ENCODE measurements at regions of chr3 and their contacts with region 1.

Region 1: DNA sequence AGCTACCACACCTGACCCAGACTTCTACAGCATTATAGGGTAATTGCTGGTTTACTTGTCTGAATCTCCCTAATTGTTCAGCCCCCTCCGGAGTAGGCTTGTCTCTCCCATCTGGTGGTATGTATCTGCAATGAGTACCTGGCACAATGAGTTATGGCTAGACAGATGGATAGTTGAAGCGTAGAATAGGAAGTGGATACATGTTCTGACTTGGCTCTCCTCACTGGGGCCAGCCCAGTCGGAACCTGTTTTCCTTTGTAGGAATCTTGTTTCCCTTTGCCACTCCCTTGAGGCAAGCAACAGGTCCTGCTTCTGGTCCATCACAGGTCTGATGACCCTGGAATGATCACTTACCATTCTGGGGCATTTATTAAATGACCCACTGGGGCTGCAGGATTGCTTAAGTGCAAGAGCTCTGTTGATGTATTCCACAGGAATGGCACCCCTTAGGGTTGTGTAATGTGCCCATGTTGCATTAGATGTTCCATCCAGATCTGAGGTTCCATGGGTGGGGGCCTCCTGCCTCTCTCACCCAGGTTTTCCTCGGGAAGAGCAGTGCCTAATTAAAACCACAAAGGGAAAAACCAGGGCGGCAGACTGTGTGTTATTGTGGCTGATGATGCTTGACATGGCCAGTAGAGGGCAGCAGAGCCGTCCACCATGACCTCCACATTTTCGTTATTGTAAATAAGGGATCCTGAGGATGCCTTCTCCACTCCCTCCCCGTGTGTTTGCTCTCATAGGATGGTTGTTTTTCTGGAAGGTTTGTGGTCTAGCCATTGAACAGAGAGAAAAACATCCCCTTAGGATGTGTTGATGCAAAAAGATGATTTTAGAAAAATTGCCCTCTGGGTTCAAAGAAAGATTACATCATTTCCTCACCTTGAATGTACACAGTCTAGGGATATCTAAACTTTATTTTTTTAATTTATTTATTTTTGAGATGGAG is 58.0 kb downstream of the CMTM8 start:
- DNase-seq: peak; percentile 78
- ATAC-seq: peak; percentile 81
- H3K4me3 Mint-ChIP-seq: peak overlapping the region; percentile 46
- H3K27ac Mint-ChIP-seq: peak overlapping the region; percentile 67
- H3K4me1 Mint-ChIP-seq: peaks cover 33% of the 10 kb centered on the region
- H3K27me3 Mint-ChIP-seq: no peaks in the 10 kb centered on the region

Region 2: GRCh38 chr3:32276279-32276847 is 20.2 kb before region 1 on chr3:
- CTCF ChIA-PET with region 1: interaction called, 10 read pairs
- POLR2A ChIA-PET with region 1: no interaction called
- intact Hi-C with region 1: no loop called
- DNase-seq: no peak
- ATAC-seq: no peak
- H3K4me3 Mint-ChIP-seq: no peak overlapping the region
- H3K27ac Mint-ChIP-seq: no peak overlapping the region
- H3K4me1 Mint-ChIP-seq: peaks cover 11% of the 10 kb centered on the region
- H3K27me3 Mint-ChIP-seq: no peaks in the 10 kb centered on the region

Region 3: GRCh38 chr3:32313723-32314473 is 17.4 kb after region 1 on chr3:
- CTCF ChIA-PET with region 1: interaction called, 13 read pairs
- POLR2A ChIA-PET with region 1: no interaction called
- intact Hi-C with region 1: no loop called
- DNase-seq: peak; percentile 54
- ATAC-seq: peak; percentile 97
- H3K4me3 Mint-ChIP-seq: peak overlapping the region; percentile 62
- H3K27ac Mint-ChIP-seq: peak overlapping the region; percentile 70
- H3K4me1 Mint-ChIP-seq: peaks cover 24% of the 10 kb centered on the region
- H3K27me3 Mint-ChIP-seq: no peaks in the 10 kb centered on the region

Region 4: GRCh38 chr3:32374788-32375595 is 78.5 kb after region 1 on chr3:
- CTCF ChIA-PET with region 1: interaction called, 13 read pairs
- POLR2A ChIA-PET with region 1: no interaction called
- intact Hi-C with region 1: loop called (anchors 2 kb)
- DNase-seq: peak; percentile 77
- ATAC-seq: peak; percentile 64
- H3K4me3 Mint-ChIP-seq: no peak overlapping the region
- H3K27ac Mint-ChIP-seq: peak overlapping the region; percentile 35
- H3K4me1 Mint-ChIP-seq: peaks cover 35% of the 10 kb centered on the region
- H3K27me3 Mint-ChIP-seq: no peaks in the 10 kb centered on the region

Region 5: DNA sequence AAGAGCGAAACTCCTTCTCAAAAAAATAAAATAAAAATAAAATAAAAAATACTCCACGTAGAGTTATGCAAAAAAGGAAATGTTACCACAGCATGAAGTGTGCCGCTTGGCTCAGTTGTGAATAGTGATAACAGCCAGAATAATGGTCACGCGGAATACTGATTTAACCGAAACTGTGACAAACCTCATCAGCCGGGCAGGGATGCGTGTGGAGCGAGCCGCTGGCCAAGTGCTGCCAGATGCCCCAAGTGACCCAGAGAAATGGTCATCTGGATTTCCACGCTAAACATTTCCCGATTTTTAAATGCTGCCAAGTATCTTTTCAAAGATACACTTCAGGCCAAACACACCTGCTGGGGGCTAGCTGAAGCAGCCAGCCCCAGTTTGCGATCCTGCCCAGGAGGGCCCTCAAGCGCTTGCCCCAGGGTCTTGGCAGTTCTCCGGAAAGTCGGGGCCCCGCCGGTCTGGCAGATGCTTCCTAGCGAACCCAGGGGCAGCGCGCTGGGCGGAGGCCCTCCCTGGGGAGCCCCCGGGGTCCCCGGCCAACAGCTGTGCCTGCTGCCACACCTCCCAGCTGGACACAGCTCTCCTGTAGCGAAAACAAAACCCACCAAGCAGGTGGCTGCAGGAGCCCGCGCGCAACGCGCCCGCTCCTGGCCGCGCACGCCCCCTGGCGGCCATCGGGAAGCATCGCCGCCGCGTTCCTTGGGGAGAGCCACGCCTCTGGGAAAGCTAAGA is 171.0 kb after region 1 on chr3:
- CTCF ChIA-PET with region 1: interaction called, 15 read pairs
- POLR2A ChIA-PET with region 1: interaction called, 7 read pairs
- intact Hi-C with region 1: loop called (anchors 1 to 5 kb)
- DNase-seq: peak; percentile 84
- ATAC-seq: peak; percentile 77
- H3K4me3 Mint-ChIP-seq: no peak overlapping the region
- H3K27ac Mint-ChIP-seq: no peak overlapping the region
- H3K4me1 Mint-ChIP-seq: peaks cover 45% of the 10 kb centered on the region
- H3K27me3 Mint-ChIP-seq: no peaks in the 10 kb centered on the region

Region 6: DNA sequence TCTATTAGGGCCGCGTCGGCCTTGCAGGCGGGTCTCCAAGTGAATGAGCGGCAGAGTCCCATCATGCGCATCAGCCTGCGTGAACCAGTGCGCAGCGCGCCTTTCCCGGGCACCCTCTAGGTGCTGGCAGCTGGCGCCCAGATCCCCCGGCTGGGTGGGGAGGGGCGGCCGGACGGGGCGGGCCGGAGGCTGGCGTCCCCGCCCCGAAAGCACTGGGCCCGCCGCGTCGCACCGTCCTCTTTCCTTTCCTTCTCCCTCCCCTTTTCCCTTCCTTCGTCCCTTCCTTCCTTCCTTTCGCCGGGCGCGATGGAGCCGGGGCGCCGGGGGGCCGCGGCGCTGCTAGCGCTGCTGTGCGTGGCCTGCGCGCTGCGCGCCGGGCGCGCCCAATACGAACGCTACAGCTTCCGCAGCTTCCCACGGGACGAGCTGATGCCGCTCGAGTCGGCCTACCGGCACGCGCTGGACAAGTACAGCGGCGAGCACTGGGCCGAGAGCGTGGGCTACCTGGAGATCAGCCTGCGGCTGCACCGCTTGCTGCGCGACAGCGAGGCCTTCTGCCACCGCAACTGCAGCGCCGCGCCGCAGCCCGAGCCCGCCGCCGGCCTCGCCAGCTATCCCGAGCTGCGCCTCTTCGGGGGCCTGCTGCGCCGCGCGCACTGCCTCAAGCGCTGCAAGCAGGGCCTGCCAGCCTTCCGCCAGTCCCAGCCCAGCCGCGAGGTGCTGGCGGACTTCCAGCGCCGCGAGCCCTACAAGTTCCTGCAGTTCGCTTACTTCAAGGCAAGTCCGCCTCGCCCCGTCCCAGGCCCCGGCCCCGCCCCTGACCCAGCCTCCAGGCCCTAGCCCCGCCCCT is 817.5 kb after region 1 on chr3 and contains the start of gene CRTAP:
- CTCF ChIA-PET with region 1: no interaction called
- POLR2A ChIA-PET with region 1: no interaction called
- intact Hi-C with region 1: no loop called
- DNase-seq: peak; percentile 93
- ATAC-seq: peak; percentile 87
- H3K4me3 Mint-ChIP-seq: peak within 1 kb of the TSS; percentile 77
- H3K27ac Mint-ChIP-seq: peak within 1 kb of the TSS; percentile 73
- H3K4me1 Mint-ChIP-seq: peaks cover 47% of the 10 kb centered on the region
- H3K27me3 Mint-ChIP-seq: no peaks in the 10 kb centered on the region
- total RNA-seq, gene CRTAP: 39.2 to 43.4 TPM

Measured in activated CD4-positive, alpha-beta T cell treated with anti-CD3 and anti-CD28 coated beads for 36 hours (primary cell).